ENCODE measurements at regions of chr2 and their contacts with region 1.

Region 1: DNA sequence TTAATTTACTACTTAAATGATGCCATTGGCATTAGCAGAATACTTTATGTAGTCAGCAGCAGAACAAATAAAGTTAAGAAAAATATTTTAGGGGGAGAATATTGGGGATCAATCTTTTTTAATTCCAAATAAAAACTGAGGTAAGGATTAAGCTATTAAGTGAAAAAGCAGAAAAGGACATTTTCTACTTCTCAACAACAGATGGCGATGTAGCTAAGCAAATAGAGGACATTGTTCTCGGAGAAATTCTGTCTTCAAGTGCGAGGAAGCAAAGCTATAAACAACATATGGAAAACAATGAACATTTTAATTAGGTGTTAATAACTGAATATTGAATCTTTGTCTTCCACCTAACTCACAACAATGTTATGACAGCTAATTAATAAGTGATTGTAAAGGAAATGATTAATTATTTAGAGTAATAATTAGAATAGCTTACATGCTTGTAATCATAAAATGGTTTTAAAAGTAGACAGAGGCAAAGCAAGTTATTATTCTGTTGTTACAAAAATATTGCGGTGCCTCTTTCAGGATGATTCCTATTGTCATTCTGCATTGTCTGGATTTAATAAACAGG is 32.9 kb upstream of the CCDC93 start:
- DNase-seq: no peak
- H3K4me3 ChIP-seq: no peak overlapping the region
- H3K27ac ChIP-seq: no peak overlapping the region
- H3K27me3 ChIP-seq: no peaks in the 10 kb centered on the region
- CTCF ChIP-seq: peak; percentile 67

Region 2: GRCh38 chr2:118013724-118014491 is 32.8 kb before region 1 on chr2 and contains the start of gene CCDC93:
- CTCF ChIA-PET with region 1: interaction called, 10 read pairs
- POLR2A ChIA-PET with region 1: no interaction called
- DNase-seq: peak; percentile 44
- H3K4me3 ChIP-seq: peak within 1 kb of the TSS; percentile 91
- H3K27ac ChIP-seq: peak within 1 kb of the TSS; percentile 39
- H3K27me3 ChIP-seq: no peaks in the 10 kb centered on the region
- CTCF ChIP-seq: no peak
- polyA plus RNA-seq, gene CCDC93: 17.7 and 19.9 TPM in 2 replicates

Region 3: DNA sequence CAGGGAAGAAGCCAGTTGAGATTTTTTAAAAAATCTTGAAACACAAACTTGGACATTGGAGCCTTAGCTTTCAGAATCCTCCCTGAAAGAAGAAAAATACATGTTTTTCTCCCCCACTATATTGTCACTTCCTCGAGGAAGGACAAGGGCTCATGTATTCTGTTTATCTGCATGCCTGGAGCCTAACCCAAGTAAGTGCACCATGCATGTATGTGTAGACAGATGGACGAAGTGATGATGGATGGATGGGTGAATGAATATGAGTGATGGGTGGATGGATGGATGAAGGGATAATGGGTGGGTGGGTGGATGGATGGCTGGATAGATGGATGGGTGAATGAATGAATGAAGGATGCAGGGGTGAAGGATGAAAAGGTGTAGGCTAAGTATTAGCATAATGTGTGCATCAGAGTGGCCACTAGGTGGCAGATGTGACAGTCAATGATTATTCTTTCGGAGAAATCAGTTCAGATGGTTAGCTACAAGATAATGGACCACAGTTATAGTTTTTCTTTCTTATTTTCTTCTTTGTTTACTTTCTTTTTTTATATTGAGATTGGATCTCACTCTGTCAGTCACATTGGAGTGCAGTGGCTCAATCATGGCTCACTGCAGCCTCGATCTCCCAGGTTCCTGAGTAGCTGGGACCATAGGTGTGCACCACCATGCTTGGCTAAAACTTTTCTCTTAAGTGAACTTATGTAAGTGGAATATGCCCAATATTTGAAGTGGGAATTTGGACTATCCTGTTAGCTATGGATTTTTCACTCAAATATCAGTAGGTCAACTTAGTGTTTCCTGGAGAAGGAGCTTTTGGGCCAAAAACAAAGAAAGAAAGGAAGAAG is 14.3 kb before region 1 on chr2:
- CTCF ChIA-PET with region 1: interaction called, 36 read pairs
- POLR2A ChIA-PET with region 1: no interaction called
- DNase-seq: no peak
- H3K4me3 ChIP-seq: no peak overlapping the region
- H3K27ac ChIP-seq: no peak overlapping the region
- H3K27me3 ChIP-seq: peaks cover 10% of the 10 kb centered on the region
- CTCF ChIP-seq: peak; percentile 77

Region 4: GRCh38 chr2:118061135-118061955 is 14.6 kb after region 1 on chr2:
- CTCF ChIA-PET with region 1: interaction called, 65 read pairs
- POLR2A ChIA-PET with region 1: no interaction called
- DNase-seq: no peak
- H3K4me3 ChIP-seq: no peak overlapping the region
- H3K27ac ChIP-seq: no peak overlapping the region
- H3K27me3 ChIP-seq: no peaks in the 10 kb centered on the region
- CTCF ChIP-seq: 0 out of 2 replicates have a peak, but pooled peaks have one; percentile 17

Region 5: DNA sequence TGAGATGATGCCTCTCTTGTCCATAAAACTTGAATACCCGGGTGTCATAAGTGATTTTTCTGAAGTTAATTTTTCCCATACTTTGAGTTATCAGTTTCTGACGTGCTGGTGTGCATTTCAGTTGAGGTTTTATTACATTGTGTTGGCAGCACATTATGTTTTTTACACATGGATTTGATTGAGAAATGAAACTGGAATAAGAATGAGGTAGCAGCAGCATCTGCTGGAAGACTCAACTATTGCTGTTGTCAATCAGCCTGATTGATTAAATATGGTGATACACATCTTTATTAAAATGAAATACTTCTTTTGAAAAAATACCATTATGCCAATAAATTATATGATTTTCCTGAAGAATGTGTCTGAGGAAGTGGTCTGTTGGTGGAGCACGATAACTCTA is 102.1 kb after region 1 on chr2:
- CTCF ChIA-PET with region 1: no interaction called
- POLR2A ChIA-PET with region 1: no interaction called
- DNase-seq: no peak
- H3K4me3 ChIP-seq: no peak overlapping the region
- H3K27ac ChIP-seq: no peak overlapping the region
- H3K27me3 ChIP-seq: no peaks in the 10 kb centered on the region
- CTCF ChIP-seq: 0 out of 2 replicates have a peak, but pooled peaks have one; percentile 6

Region 6: GRCh38 chr2:118202707-118203303 is 156.1 kb after region 1 on chr2:
- CTCF ChIA-PET with region 1: interaction called, 12 read pairs
- POLR2A ChIA-PET with region 1: no interaction called
- DNase-seq: no peak
- H3K4me3 ChIP-seq: no peak overlapping the region
- H3K27ac ChIP-seq: no peak overlapping the region
- H3K27me3 ChIP-seq: no peaks in the 10 kb centered on the region
- CTCF ChIP-seq: peak; percentile 86

Region 7: GRCh38 chr2:118221666-118222594 is 175.2 kb after region 1 on chr2:
- CTCF ChIA-PET with region 1: interaction called, 10 read pairs
- POLR2A ChIA-PET with region 1: no interaction called
- DNase-seq: peak; percentile 36
- H3K4me3 ChIP-seq: no peak overlapping the region
- H3K27ac ChIP-seq: no peak overlapping the region
- H3K27me3 ChIP-seq: peaks cover 44% of the 10 kb centered on the region
- CTCF ChIP-seq: peak; percentile 75

Region 8: GRCh38 chr2:118855451-118856279 is 808.9 kb after region 1 on chr2:
- CTCF ChIA-PET with region 1: interaction called, 36 read pairs
- POLR2A ChIA-PET with region 1: no interaction called
- DNase-seq: peak; percentile 21
- H3K4me3 ChIP-seq: 0 out of 2 replicates have a peak overlapping the region, but pooled peaks have one; percentile 20
- H3K27ac ChIP-seq: no peak overlapping the region
- H3K27me3 ChIP-seq: peaks cover 95% of the 10 kb centered on the region
- CTCF ChIP-seq: peak; percentile 95